SK-N-SH (cell line): ENCODE measurements at regions of chr2 and their contacts with region 1.

Region 1: DNA sequence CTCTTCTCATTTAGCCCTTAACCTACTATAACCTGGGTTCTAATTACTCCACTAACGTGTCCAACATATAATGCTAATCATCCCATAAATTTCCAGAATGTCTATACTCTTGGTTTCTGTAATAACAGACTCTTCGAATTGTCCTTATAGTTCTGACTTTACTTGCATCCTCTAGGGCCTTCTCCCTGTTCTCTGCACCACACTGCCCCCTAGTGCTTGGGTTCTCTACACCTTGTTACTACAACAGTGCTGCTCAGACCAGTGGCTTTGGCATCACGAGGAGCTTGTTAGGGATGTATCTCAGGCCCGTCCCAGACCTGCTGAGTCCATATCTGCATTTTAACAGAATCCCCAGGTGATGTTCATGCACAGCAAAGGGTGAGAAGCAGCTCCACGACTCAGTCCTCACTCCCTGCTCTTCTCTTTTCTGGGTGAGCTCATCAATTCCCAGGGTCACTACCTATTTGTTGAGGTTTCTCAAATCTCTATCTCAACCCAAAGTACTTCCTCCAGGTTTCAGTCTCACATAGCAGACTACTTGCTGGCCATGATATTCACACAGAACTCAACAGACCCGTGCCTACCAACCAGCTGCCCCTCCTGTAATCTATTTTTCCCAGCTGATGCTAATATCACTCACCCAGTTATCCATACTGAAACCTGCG is 14.5 kb upstream of the DDX1 start:
- DNase-seq: peak; percentile 73
- H3K4me3 ChIP-seq: no peak overlapping the region
- H3K27ac ChIP-seq: no peak overlapping the region
- H3K4me1 ChIP-seq: no peaks in the 10 kb centered on the region
- H3K27me3 ChIP-seq: no peaks in the 10 kb centered on the region
- CTCF ChIP-seq: peak; percentile 95
- EP300 ChIP-seq: no peak
- RAD21 ChIP-seq: peak; percentile 100

Region 2: GRCh38 chr2:14634201-14634884 is 942.9 kb before region 1 on chr2:
- CTCF ChIA-PET with region 1: interaction called, 19 read pairs
- POLR2A ChIA-PET with region 1: no interaction called
- DNase-seq: peak; percentile 94
- H3K4me3 ChIP-seq: peak overlapping the region; percentile 52 to 67
- H3K27ac ChIP-seq: no peak overlapping the region
- H3K4me1 ChIP-seq: peaks cover 0 to 33% of the 10 kb centered on the region in 2 experiments; a peak in 2 of 4 replicates
- H3K27me3 ChIP-seq: peaks cover 15% of the 10 kb centered on the region
- CTCF ChIP-seq: peak; percentile 82
- EP300 ChIP-seq: no peak; a peak in 1 of 4 replicates
- RAD21 ChIP-seq: peak; percentile 62

Region 3: DNA sequence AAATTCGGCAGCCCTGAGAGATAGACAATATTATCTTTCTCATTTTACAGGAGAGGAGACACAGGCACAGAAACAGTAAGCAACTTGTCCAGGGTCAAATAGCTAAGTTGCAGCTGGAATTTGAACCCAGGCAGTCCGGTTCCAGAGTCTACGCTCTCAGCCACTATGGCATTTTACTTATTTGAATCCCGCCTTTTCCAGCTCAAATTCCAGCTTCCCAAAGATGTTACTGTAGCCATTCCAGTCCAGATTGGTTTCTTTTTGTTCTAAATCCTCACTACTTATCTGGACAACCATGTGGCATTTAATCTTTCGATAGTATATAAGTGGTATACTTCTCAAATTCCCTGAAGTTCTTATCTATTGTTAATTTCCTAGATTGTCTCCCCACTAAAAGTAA is 141.7 kb before region 1 on chr2:
- CTCF ChIA-PET with region 1: interaction called, 11 read pairs
- POLR2A ChIA-PET with region 1: no interaction called
- DNase-seq: no peak
- H3K4me3 ChIP-seq: no peak overlapping the region
- H3K27ac ChIP-seq: no peak overlapping the region
- H3K4me1 ChIP-seq: peaks cover 0 to 5% of the 10 kb centered on the region in 2 experiments; a peak in 1 of 4 replicates
- H3K27me3 ChIP-seq: no peaks in the 10 kb centered on the region
- CTCF ChIP-seq: no peak
- EP300 ChIP-seq: no peak
- RAD21 ChIP-seq: no peak

Region 4: GRCh38 chr2:15546297-15547098 is 30.7 kb before region 1 on chr2:
- CTCF ChIA-PET with region 1: interaction called, 29 read pairs
- POLR2A ChIA-PET with region 1: no interaction called
- DNase-seq: no peak
- H3K4me3 ChIP-seq: no peak overlapping the region
- H3K27ac ChIP-seq: peak overlapping the region in 1 of 2 experiments; percentile 66; a peak in 2 of 4 replicates
- H3K4me1 ChIP-seq: peaks cover 0 to 14% of the 10 kb centered on the region in 2 experiments; a peak in 2 of 4 replicates
- H3K27me3 ChIP-seq: no peaks in the 10 kb centered on the region
- CTCF ChIP-seq: peak; percentile 55
- EP300 ChIP-seq: no peak
- RAD21 ChIP-seq: no peak

Region 5: DNA sequence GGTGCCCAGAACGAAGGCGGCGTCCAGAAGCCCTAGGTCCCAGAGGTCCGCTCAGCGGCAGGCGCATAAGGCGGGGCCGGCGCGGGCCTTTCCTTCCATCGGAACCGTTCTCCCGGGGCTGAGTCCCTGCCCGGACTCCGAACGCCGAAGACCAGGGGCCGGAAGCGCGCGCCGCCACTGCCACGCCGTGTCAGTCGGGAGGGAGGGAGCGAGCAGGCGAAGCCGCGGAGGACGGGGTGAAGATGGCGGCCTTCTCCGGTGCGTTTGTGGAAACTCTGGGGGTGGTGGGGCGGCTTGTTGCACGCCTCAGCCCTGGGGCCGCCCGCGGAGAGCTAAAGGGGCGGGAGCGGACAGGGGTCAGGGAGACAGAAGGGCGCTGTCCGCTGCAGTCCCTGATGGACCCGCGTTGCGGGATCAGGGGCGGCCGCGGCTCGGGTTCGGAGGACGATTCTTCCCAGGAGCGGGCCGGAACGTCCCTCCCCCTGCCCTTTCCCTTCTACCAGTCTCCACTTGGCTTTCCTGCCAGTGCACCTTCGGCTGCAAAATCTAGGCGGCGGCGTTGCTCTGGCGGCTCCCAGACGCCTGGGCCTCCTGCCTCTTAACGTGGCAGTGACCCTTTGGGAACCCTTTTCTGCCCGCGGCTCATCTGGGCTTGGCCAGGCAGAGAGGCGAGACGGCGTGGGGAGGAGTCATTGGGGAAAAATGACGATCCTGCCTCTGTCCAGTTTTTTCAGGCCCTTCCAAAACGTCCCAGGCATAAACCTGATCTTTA is 14.7 kb after region 1 on chr2 and contains the start of gene DDX1:
- CTCF ChIA-PET with region 1: interaction called, 98 read pairs
- POLR2A ChIA-PET with region 1: interaction called, 3 read pairs
- DNase-seq: peak; percentile 96
- H3K4me3 ChIP-seq: peak within 1 kb of the TSS; percentile 82 to 85
- H3K27ac ChIP-seq: peak within 1 kb of the TSS; percentile 90 to 95
- H3K4me1 ChIP-seq: peaks cover 8 to 14% of the 10 kb centered on the region in 2 experiments; a peak in 3 of 4 replicates
- H3K27me3 ChIP-seq: no peaks in the 10 kb centered on the region
- CTCF ChIP-seq: no peak
- EP300 ChIP-seq: no peak
- RAD21 ChIP-seq: peak; percentile 7; the same call in 1 of the 2 replicates
- polyA plus RNA-seq, gene DDX1: 54.5 and 64.2 TPM in 2 replicates

Region 6: GRCh38 chr2:15628900-15629855 is 52.0 kb after region 1 on chr2:
- CTCF ChIA-PET with region 1: no interaction called
- POLR2A ChIA-PET with region 1: no interaction called
- DNase-seq: no peak
- H3K4me3 ChIP-seq: no peak overlapping the region
- H3K27ac ChIP-seq: no peak overlapping the region
- H3K4me1 ChIP-seq: no peaks in the 10 kb centered on the region; a peak in 1 of 4 replicates
- H3K27me3 ChIP-seq: no peaks in the 10 kb centered on the region
- CTCF ChIP-seq: no peak
- EP300 ChIP-seq: no peak
- RAD21 ChIP-seq: no peak